Thyroid gland (tissue), 4 donors: ENCODE measurements at regions of chr19 and their contacts with region 1.

Region 1: GRCh38 chr19:39970675-39971379 is at the start of gene PSMC4:
- DNase-seq: peak; percentile 99
- H3K4me3 ChIP-seq: peak within 1 kb of the TSS; percentile 38 to 64 (median 41)
- H3K27ac ChIP-seq: peak within 1 kb of the TSS; percentile 83 to 92 (median 84)
- H3K4me1 ChIP-seq: peaks cover 23 to 42% of the 10 kb centered on the region in 2 donors
- H3K27me3 ChIP-seq: no peaks in the 10 kb centered on the region
- CTCF ChIP-seq: peak; percentile 33 to 95 (median 73)
- POLR2A ChIP-seq: peak in 1 of 2 donors; percentile 87
- total RNA-seq, gene PSMC4: 120 to 220 (median 166) TPM

Region 2: DNA sequence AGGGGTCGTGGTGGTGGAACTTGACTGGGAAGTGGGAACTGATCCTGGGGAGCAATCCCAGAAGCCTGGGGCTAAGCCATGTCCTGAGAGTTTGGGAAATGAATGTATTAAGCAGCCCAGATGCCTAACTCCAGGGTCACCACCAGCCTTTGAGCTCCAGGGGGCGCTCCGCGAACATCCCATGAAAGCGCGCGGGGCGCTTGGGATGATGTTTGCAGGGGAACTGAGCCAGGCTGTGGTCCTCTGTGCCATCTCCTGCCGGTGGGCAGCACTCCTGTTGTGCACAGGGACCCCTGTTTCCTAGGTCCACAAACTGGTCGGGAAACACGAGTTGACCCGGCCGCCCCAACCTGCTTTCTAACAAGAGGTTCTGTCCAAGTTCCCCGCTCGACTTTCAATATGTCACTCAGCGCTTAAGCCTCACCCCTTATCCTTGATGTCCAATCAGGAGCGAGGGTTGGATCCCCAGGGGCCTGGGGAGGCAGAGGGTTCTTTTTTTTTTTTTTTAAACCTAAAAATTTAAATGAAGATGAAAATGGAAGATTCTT is 177.8 kb before region 1 on chr19:
- intact Hi-C with region 1: loop called (anchors 5 kb)
- DNase-seq: peak; percentile 75 to 84
- H3K4me3 ChIP-seq: peak overlapping the region in 1 of 3 donors; percentile 25
- H3K27ac ChIP-seq: no peak overlapping the region
- H3K4me1 ChIP-seq: no peaks in the 10 kb centered on the region
- H3K27me3 ChIP-seq: no peaks in the 10 kb centered on the region
- CTCF ChIP-seq: peak; percentile 64 to 93 (median 88)
- POLR2A ChIP-seq: no peak

Region 3: DNA sequence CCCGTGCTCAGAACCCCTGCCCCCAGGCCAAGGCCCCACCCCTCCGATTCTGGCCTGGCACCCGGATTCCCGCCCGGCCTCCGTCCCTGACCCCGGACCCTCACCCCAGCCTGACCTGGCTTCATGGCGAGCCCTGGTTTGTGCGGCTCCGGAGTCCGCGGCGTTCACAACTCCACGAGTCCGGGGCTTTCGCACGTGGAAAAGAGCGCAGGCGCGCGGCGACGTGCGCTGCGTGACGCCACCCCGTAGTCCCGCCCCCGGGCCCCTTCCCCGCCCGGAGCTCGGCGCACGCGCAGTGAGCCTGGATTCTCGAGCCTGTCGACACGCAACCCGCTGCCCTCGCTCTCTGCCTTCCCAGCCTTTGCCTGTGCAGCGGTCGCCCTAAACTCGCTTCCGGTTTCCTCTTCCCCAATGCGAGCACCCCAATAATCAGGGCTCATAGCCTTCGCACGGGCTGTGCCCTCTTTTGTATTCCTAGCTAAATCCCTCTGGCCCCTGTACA is 124.6 kb before region 1 on chr19 and contains the start of gene FBL:
- intact Hi-C with region 1: loop called (anchors 10 kb)
- DNase-seq: peak; percentile 95 to 96
- H3K4me3 ChIP-seq: peak within 1 kb of the TSS; percentile 53 to 90 (median 86)
- H3K27ac ChIP-seq: peak within 1 kb of the TSS; percentile 77 to 86 (median 80)
- H3K4me1 ChIP-seq: peaks cover 18 to 38% of the 10 kb centered on the region in 2 donors
- H3K27me3 ChIP-seq: no peaks in the 10 kb centered on the region
- CTCF ChIP-seq: no peak
- POLR2A ChIP-seq: peak; percentile 2 to 78
- total RNA-seq, gene FBL: 80.9 to 118 (median 91.1) TPM

Region 4: GRCh38 chr19:39889872-39890545 is 80.8 kb before region 1 on chr19:
- intact Hi-C with region 1: loop called (anchors 5 kb)
- DNase-seq: peak in 1 of 2 donors; percentile 26
- H3K4me3 ChIP-seq: no peak overlapping the region
- H3K27ac ChIP-seq: peak overlapping the region; percentile 47 to 79 (median 68)
- H3K4me1 ChIP-seq: peaks cover 22 to 26% of the 10 kb centered on the region in 2 donors
- H3K27me3 ChIP-seq: no peaks in the 10 kb centered on the region
- CTCF ChIP-seq: no peak
- POLR2A ChIP-seq: no peak

Region 5: DNA sequence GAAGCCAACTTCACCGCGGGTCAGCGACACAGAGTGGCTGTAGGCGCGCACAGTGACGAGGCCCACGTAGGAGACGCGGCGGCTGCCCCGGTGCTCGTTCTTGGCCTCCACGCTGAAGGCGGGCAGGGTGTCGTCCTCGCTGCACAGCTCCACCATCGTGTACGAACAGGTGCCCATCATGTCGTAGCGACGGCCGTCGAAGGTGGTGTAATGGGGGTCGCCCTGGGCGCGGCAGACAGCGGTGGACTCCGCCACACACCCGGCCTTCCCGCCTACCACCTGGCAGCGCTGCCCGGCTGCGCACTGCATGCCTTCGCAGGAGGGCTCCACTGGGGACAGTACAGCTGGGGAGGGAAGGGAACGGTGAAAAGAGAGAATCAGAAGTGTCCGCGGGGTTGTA is 46.4 kb before region 1 on chr19:
- intact Hi-C with region 1: no loop called
- DNase-seq: no peak
- H3K4me3 ChIP-seq: no peak overlapping the region
- H3K27ac ChIP-seq: no peak overlapping the region
- H3K4me1 ChIP-seq: no peaks in the 10 kb centered on the region
- H3K27me3 ChIP-seq: no peaks in the 10 kb centered on the region
- CTCF ChIP-seq: no peak
- POLR2A ChIP-seq: no peak

Region 6: DNA sequence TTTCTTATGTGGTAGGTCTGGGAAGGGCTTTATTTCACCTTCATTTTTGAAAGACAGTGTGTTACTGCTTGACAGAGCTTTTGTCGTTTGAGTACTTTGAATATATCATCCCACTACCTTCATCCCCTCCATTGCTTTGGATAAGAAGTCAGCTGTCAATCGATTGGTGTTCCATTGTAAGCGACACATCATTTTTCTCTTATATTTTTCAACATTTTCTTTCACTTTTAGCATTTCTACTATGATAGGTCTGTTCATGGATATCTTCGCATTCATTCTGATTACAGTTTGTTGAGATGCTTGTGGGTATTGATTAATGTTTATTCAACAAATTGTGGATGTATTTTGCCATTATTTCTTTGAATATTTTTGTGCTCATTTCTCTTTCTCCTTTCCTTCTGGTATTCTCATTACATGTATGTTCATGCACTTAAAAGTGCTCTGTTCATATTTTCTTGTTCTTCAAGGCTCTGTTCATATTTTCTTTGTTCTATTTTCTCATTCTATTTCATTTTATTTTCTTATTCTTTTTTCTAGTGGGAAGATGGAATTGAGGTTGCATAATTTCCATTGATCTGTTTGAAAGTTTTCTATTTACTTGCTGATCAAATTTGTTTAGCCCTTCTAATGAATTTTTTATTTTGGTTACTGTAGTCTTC is 55.2 kb after region 1 on chr19:
- intact Hi-C with region 1: no loop called
- DNase-seq: no peak
- H3K4me3 ChIP-seq: no peak overlapping the region
- H3K27ac ChIP-seq: no peak overlapping the region
- H3K4me1 ChIP-seq: no peaks in the 10 kb centered on the region
- H3K27me3 ChIP-seq: no peaks in the 10 kb centered on the region
- CTCF ChIP-seq: no peak
- POLR2A ChIP-seq: no peak